IMR-90 (cell line): ENCODE measurements at regions of chr5 and their contacts with region 1.

Region 1: DNA sequence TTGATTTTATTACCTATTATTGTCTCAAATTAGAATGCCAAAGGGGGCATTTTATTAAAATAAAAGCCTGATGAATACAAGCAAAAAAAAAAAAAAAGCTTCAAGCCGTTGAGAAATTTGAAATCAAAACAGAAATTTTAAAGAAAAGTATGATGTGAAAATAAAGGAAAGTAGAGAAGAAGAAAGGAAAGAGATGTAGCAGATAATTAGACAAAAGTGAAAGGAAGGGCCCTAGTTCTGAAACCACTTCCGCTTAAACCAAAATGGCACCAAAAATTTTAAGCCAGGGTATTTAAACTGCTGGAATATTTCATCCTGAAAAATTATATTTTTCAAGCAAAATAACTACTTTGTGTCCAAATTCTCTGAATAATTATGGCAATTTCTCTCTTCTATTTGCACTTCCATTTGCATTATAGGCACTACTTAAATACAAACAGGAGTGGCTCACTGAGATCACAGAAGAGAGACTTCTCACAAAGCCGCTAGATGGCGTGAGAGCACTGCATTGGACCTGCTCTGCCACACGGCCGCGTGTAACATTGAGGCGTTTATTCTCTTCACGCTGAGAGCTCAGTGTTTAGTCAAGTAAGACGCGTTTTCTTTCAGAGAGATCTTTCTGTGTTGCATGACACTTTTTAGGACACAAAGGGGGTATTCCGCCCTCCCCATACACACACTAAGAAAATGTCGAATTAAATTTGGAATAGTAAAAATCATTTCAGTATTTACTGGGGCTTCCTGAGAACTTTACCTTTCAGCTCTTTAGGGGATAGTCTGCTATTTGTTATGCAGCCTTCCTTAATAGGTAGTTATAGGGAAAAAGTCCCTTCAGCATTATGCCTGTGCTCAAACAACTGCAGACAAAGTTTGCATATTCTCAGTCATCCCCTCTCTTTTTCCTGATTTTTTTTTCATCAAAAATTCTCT is 368.4 kb upstream of the CCNH start:
- DNase-seq: peak; percentile 74
- ATAC-seq: peak; percentile 100
- H3K4me3 ChIP-seq: no peak overlapping the region
- H3K27ac ChIP-seq: no peak overlapping the region
- H3K4me1 ChIP-seq: no peaks in the 10 kb centered on the region
- H3K27me3 ChIP-seq: no peaks in the 10 kb centered on the region; the same call in 1 of the 2 replicates
- CTCF ChIP-seq: peak; percentile 94
- POLR2A ChIP-seq: 0 out of 2 replicates have a peak, but pooled peaks have one; percentile 24
- RAD21 ChIP-seq: peak; percentile 97

Region 2: DNA sequence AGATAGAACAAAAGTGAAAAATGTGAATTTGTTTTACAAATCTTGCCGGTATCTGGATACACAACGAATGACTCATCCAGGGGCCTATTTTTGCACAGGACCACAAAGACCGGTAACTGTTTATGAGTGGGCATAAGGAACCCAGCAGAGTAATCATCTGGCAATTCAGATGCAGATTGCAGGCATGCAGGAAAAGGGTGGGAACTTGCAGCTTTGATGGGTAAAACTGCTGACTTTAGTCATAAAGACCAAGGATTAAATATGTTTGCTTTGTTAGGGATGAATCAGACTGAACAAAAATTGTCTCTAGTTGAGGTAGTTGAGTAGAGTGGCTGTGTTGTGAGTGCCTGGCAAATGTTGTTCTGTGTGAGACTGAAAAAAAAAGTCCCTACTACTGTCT is 58.8 kb before region 1 on chr5:
- CTCF ChIA-PET with region 1: no interaction called
- POLR2A ChIA-PET with region 1: no interaction called
- dilution Hi-C with region 1: no loop called
- in situ Hi-C with region 1: no loop called
- intact Hi-C with region 1: no loop called
- DNase-seq: no peak
- ATAC-seq: no peak
- H3K4me3 ChIP-seq: no peak overlapping the region
- H3K27ac ChIP-seq: no peak overlapping the region
- H3K4me1 ChIP-seq: no peaks in the 10 kb centered on the region
- H3K27me3 ChIP-seq: no peaks in the 10 kb centered on the region
- CTCF ChIP-seq: no peak
- POLR2A ChIP-seq: no peak
- RAD21 ChIP-seq: no peak

Region 3: DNA sequence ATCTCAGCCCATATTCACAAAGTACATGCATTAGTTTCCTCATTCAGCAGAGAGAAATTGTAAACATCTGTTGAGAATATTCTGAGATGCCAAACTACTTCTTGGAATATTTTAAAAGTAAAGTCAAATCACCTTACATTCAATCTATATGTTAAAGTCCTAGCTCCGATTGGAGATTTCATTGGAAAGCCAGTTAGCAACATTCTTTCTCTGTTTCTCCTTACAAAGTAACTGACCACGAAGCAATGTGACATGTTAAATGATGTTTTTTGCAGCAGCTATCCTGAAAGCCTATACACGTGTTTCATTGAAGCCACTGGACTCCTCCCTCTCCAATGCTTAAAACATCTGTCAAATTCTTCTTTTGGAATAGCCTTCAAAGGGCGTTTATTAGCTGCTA is 10.8 kb after region 1 on chr5:
- CTCF ChIA-PET with region 1: interaction called, 11 read pairs
- POLR2A ChIA-PET with region 1: no interaction called
- dilution Hi-C with region 1: no loop called
- in situ Hi-C with region 1: no loop called
- intact Hi-C with region 1: no loop called
- DNase-seq: no peak
- ATAC-seq: no peak
- H3K4me3 ChIP-seq: no peak overlapping the region
- H3K27ac ChIP-seq: no peak overlapping the region
- H3K4me1 ChIP-seq: no peaks in the 10 kb centered on the region
- H3K27me3 ChIP-seq: no peaks in the 10 kb centered on the region
- CTCF ChIP-seq: no peak
- POLR2A ChIP-seq: no peak
- RAD21 ChIP-seq: no peak

Region 4: DNA sequence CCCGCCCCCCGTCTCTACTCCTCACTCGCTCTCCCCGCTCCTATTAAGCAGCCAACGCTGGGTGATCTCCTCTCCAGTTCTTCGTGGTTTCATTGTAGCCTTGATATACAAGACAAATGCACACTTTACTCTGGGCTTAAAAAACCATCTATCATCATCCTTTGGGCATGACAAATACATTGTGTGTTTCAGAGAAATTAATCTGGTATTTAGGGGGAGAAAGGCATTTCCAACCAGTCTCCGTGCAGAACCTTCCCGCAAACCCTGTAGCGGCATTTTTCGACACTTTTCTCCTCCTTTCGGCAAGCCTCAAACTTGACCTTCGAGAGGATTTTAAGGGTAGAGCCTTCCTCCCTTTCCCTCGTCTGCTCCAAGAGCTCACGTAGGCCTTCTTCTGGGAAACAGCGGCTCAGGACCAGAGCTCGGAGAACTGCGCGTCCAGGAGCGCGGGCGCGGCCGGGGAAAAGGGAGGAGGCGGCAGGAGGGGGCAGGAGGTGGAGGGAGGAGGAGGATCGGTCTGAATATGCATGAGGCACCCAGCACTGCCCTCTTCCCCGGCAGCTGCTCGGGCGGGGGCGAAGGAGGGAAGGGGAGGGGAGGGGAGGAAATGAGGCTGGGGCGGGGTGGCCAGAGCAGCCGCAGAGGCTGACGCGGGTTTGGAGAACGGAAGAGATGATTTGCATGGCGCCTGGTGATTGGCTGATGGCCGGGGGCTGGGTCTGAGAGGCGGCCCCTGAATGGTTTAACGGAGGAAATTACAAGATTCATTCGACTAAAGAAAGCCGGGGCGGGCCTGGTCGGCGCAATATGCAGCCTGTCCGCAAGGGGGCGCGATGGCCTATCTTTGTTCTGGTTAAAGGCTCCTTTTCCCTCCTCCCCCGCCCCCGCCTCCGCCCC is 360.0 kb after region 1 on chr5:
- CTCF ChIA-PET with region 1: no interaction called
- POLR2A ChIA-PET with region 1: no interaction called
- dilution Hi-C with region 1: no loop called
- in situ Hi-C with region 1: no loop called
- intact Hi-C with region 1: loop called (anchors 1 kb)
- DNase-seq: peak; percentile 93
- ATAC-seq: peak; percentile 97
- H3K4me3 ChIP-seq: peak overlapping the region; percentile 44
- H3K27ac ChIP-seq: no peak overlapping the region
- H3K4me1 ChIP-seq: no peaks in the 10 kb centered on the region
- H3K27me3 ChIP-seq: peaks cover 50% of the 10 kb centered on the region
- CTCF ChIP-seq: peak; percentile 68
- POLR2A ChIP-seq: no peak
- RAD21 ChIP-seq: peak; percentile 38

Region 5: GRCh38 chr5:88322785-88323184 is 541.7 kb after region 1 on chr5:
- CTCF ChIA-PET with region 1: no interaction called
- POLR2A ChIA-PET with region 1: no interaction called
- dilution Hi-C with region 1: no loop called
- in situ Hi-C with region 1: no loop called
- intact Hi-C with region 1: no loop called
- DNase-seq: no peak
- ATAC-seq: no peak
- H3K4me3 ChIP-seq: no peak overlapping the region
- H3K27ac ChIP-seq: no peak overlapping the region
- H3K4me1 ChIP-seq: no peaks in the 10 kb centered on the region
- H3K27me3 ChIP-seq: no peaks in the 10 kb centered on the region
- CTCF ChIP-seq: no peak
- POLR2A ChIP-seq: no peak
- RAD21 ChIP-seq: no peak

Region 6: DNA sequence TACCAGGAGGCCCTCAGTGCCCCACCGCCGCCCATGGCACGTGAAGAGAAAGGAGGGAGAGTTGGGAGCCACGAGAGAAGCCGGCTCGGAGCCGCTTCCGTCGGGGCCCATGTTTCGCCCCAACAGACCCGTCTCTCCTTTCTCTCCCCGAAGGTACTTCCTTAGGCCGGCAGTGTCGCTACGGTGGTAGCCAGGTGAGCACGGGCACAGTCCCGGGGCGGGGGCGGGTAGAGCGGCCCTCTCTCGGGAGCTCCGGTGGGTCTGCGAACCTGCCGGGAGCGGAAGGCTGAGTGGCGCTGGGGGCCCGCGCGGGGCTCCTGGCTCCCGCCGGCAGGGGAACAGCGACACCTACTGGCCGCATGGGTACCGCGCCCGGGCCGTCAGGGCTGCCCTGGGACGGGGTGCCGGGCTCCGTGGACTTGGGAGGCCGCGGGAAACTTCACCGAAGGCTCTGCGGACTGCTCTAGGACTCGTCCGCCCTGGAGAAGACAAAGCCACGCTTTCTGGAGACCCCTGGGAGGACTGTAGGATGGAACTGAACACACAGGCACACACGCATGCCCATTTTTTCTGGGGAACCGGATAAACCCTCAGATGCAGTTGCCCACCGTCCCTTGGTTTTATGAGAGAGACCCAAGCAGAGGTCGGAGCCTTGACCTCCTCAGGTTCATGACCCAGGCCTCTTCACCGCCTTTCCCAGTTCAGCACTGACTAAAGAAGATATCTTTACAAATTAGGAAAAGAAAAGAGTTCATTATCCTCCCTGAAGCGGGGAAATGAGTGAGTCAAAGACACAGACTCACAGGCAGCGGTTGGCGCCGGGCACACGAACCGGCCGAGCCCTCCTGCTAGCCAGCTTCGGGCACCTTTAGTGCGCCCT is 899.4 kb after region 1 on chr5:
- CTCF ChIA-PET with region 1: interaction called, 19 read pairs
- POLR2A ChIA-PET with region 1: no interaction called
- dilution Hi-C with region 1: no loop called
- in situ Hi-C with region 1: loop called (anchors 10 kb)
- intact Hi-C with region 1: loop called (anchors 1 kb)
- DNase-seq: peak; percentile 14
- ATAC-seq: peak; percentile 96
- H3K4me3 ChIP-seq: peak overlapping the region; percentile 32
- H3K27ac ChIP-seq: no peak overlapping the region
- H3K4me1 ChIP-seq: peaks cover 2% of the 10 kb centered on the region; the same call in 1 of the 2 replicates
- H3K27me3 ChIP-seq: peaks cover 77% of the 10 kb centered on the region
- CTCF ChIP-seq: peak; percentile 83
- POLR2A ChIP-seq: no peak
- RAD21 ChIP-seq: peak; percentile 77

Region 7: DNA sequence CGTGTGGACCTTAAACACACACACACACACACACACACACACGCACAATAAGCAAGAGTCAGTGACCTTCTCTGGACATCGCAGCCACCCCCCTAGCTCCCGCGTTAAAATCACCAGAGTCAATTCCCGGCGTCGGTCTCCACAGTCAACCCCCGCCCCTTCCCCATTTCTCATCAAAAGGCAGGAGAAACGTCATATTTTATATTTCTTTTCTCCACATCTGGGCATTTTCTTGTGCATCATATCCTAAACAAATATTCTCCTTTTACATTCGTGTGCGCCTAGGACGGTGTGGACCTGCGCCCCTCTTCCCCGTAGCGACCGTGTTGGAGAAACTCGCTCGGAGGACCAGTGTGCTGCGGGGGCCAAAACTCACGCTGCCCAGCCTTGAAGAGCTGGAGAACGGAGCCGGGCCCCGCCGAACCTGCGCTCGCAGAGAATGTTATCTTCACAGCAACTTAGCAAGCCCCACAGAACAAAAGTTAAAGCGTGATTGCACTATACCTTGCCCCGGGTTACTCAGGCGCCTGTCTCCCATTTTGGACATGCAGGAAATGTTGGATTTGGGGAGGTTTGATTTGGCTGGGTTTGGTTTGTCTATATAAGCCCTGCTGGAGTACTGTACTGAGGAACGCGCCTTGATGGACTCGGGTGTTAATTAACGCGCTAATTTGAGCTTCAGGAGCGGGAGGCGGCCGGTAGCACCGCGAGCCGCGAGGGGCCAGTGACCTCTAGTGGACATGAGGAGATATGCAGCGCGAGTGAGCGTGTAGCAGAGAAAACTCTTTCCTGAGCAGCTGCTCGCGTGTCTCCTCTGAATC is 909.5 kb after region 1 on chr5:
- CTCF ChIA-PET with region 1: interaction called, 22 read pairs
- POLR2A ChIA-PET with region 1: no interaction called
- dilution Hi-C with region 1: no loop called
- in situ Hi-C with region 1: loop called (anchors 10 kb)
- intact Hi-C with region 1: loop called (anchors 1 kb)
- DNase-seq: peak; percentile 50
- ATAC-seq: peak; percentile 91
- H3K4me3 ChIP-seq: no peak overlapping the region
- H3K27ac ChIP-seq: no peak overlapping the region
- H3K4me1 ChIP-seq: peaks cover 3% of the 10 kb centered on the region; the same call in 1 of the 2 replicates
- H3K27me3 ChIP-seq: peaks cover 95% of the 10 kb centered on the region
- CTCF ChIP-seq: peak; percentile 81
- POLR2A ChIP-seq: no peak
- RAD21 ChIP-seq: peak; percentile 79

Region 8: GRCh38 chr5:88724201-88724600 is 943.1 kb after region 1 on chr5:
- CTCF ChIA-PET with region 1: interaction called, 9 read pairs
- POLR2A ChIA-PET with region 1: no interaction called
- dilution Hi-C with region 1: no loop called
- in situ Hi-C with region 1: loop called (anchors 10 kb)
- intact Hi-C with region 1: loop called (anchors 1 kb)
- DNase-seq: peak; percentile 29
- ATAC-seq: no peak
- H3K4me3 ChIP-seq: no peak overlapping the region
- H3K27ac ChIP-seq: no peak overlapping the region
- H3K4me1 ChIP-seq: no peaks in the 10 kb centered on the region
- H3K27me3 ChIP-seq: no peaks in the 10 kb centered on the region
- CTCF ChIP-seq: peak; percentile 52
- POLR2A ChIP-seq: no peak
- RAD21 ChIP-seq: peak; percentile 51